Activated B cell treated with CpG ODN at 0.5 μM for 24 hours (primary cell): ENCODE measurements at regions of chr2 and their contacts with region 1.

Region 1: GRCh38 chr2:148509288-148509902 is 135.2 kb upstream of the EPC2 start:
- DNase-seq: peak; percentile 63
- ATAC-seq: peak; percentile 100
- H3K4me3 Mint-ChIP-seq: peak overlapping the region; percentile 70
- H3K27ac Mint-ChIP-seq: peak overlapping the region; percentile 32
- H3K4me1 Mint-ChIP-seq: peaks cover 12% of the 10 kb centered on the region
- H3K27me3 Mint-ChIP-seq: no peaks in the 10 kb centered on the region
- CTCF ChIP-seq: peak; percentile 43

Region 2: DNA sequence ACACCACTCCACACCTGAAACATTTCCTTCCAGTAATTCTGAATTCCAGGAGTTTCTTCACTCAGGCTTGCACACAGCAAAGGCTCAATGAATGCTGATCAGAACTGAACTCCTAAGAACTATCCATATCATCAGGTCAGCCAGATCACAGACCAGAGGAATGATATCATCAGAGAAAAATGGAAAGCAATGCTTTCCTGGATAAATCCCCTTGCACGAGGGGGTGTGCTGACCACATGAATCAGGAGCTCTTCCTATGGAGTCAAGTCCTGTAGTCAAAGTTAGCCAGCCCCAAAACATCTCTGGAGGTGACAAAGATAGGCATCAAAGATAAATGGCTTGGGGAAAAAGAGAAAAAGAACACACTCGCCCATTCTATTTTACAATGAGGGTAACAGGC is 748.4 kb before region 1 on chr2:
- CTCF ChIA-PET with region 1: no interaction called
- POLR2A ChIA-PET with region 1: no interaction called
- intact Hi-C with region 1: no loop called
- DNase-seq: no peak
- ATAC-seq: no peak
- H3K4me3 Mint-ChIP-seq: no peak overlapping the region
- H3K27ac Mint-ChIP-seq: no peak overlapping the region
- H3K4me1 Mint-ChIP-seq: no peaks in the 10 kb centered on the region
- H3K27me3 Mint-ChIP-seq: no peaks in the 10 kb centered on the region
- CTCF ChIP-seq: no peak

Region 3: DNA sequence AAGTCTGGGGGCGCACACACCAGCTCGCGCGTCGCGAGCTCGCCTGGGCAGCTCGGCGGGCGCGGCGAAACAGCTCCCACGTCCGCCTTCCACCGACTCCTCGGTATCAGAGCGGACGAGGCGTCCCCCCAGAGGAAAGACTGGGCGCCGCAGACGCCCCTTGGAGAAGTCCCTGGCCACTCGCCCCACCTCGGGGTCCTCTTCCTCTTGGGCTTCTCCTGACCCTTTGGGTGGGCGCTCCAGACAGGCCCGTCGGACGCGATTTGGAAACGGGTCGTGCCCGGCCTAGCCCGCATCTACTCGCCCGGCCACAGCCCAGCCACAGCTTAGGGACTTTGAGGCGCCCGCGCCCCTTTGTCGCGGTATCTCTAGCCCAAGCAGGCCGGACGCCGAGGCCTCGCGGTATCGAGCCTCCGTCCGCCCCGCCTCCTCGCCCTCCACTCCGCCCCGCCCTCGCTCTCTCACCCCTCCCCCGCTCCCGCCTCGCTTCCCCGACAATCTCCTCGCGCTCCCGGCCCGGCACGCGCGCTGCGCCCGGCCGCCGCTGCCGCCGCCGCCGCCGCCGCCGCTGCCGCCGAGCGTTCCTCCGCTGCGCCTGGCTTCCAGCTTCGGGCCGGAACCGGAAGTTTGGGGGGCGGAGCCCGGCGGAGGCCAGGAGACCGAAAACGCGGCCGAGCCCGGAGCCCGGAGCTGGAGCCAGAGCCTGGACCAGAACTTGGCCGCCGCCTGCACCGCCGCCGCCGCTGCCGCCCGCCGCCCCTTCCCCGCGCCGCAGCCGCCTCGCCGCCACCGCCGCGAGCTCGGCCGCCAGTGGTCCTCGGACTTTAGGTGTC is 665.3 kb before region 1 on chr2:
- CTCF ChIA-PET with region 1: no interaction called
- POLR2A ChIA-PET with region 1: no interaction called
- intact Hi-C with region 1: loop called (anchors 5 kb)
- DNase-seq: peak; percentile 88
- ATAC-seq: peak; percentile 83
- H3K4me3 Mint-ChIP-seq: peak overlapping the region; percentile 88
- H3K27ac Mint-ChIP-seq: peak overlapping the region; percentile 80
- H3K4me1 Mint-ChIP-seq: peaks cover 29% of the 10 kb centered on the region
- H3K27me3 Mint-ChIP-seq: peaks cover 31% of the 10 kb centered on the region
- CTCF ChIP-seq: no peak

Region 4: DNA sequence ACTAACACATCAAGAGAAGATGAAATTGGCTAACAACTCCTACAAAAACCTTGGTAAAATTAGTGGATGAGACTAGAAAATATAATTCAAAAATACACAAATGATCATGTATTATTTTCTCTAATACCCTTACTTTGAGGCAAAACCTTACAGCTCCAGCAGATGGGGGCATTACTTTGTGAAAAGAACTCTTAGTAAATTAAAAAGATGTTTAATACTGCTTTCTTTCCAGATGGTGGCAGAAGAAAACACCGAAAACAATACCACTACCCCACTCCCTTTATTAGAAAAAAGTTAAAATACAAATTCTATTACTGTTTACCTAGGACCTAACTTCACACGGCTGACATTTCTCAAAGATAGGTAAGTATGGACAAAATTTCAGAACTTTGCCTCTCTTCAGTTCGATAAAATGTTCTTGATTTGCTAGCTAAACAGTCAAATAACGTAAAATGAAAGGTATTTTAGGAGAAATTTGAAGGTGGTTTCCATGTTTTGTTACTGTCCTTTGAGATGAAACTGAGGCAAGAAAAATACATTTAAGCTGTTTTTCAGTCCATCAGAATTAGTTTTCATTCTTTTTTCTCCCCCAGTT is 519.5 kb before region 1 on chr2:
- CTCF ChIA-PET with region 1: interaction called, 118 read pairs
- POLR2A ChIA-PET with region 1: interaction called, 3 read pairs
- intact Hi-C with region 1: loop called (anchors 1 kb)
- DNase-seq: no peak
- ATAC-seq: peak; percentile 83
- H3K4me3 Mint-ChIP-seq: no peak overlapping the region
- H3K27ac Mint-ChIP-seq: no peak overlapping the region
- H3K4me1 Mint-ChIP-seq: peaks cover 18% of the 10 kb centered on the region
- H3K27me3 Mint-ChIP-seq: no peaks in the 10 kb centered on the region
- CTCF ChIP-seq: no peak

Region 5: GRCh38 chr2:148201075-148202004 is 308.1 kb before region 1 on chr2:
- CTCF ChIA-PET with region 1: no interaction called
- POLR2A ChIA-PET with region 1: no interaction called
- intact Hi-C with region 1: loop called (anchors 1 kb)
- DNase-seq: peak; percentile 16
- ATAC-seq: peak; percentile 49
- H3K4me3 Mint-ChIP-seq: no peak overlapping the region
- H3K27ac Mint-ChIP-seq: no peak overlapping the region
- H3K4me1 Mint-ChIP-seq: no peaks in the 10 kb centered on the region
- H3K27me3 Mint-ChIP-seq: no peaks in the 10 kb centered on the region
- CTCF ChIP-seq: no peak

Region 6: GRCh38 chr2:148582679-148583511 is 73.5 kb after region 1 on chr2:
- CTCF ChIA-PET with region 1: no interaction called
- POLR2A ChIA-PET with region 1: no interaction called
- intact Hi-C with region 1: no loop called
- DNase-seq: no peak
- ATAC-seq: no peak
- H3K4me3 Mint-ChIP-seq: no peak overlapping the region
- H3K27ac Mint-ChIP-seq: no peak overlapping the region
- H3K4me1 Mint-ChIP-seq: peaks cover 6% of the 10 kb centered on the region
- H3K27me3 Mint-ChIP-seq: peaks cover 7% of the 10 kb centered on the region
- CTCF ChIP-seq: no peak

Region 7: DNA sequence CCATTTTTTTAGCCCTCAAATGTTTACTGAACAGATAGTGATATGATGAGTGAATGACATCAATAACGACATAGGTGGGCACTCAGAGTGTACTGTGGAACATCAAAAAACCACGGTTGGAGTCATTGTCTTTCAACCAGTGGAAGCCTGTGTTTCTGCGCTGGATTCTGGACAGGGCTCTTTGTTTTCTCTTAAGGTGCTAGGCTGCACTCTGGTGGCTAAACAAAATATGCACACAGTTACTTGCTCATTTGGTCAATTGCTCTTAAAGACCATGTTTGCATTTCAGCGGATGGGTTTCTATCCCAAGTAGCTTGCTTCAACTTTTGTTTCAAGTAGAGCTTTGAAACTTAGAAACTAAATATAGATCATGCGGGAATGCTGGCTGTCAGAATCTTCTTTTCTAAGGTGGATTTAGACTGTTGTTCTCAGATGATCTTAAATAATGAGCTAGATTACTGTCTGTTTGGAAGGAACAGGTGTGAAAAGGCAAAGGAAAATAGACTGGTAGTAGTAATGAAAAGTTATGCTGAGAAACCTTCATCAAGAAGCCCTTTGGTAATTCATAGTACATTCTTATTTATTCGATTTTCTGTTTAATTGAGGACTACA is 480.6 kb after region 1 on chr2:
- CTCF ChIA-PET with region 1: interaction called, 13 read pairs
- POLR2A ChIA-PET with region 1: no interaction called
- intact Hi-C with region 1: loop called (anchors 1 kb)
- DNase-seq: no peak
- ATAC-seq: peak; percentile 40
- H3K4me3 Mint-ChIP-seq: no peak overlapping the region
- H3K27ac Mint-ChIP-seq: no peak overlapping the region
- H3K4me1 Mint-ChIP-seq: peaks cover 13% of the 10 kb centered on the region
- H3K27me3 Mint-ChIP-seq: no peaks in the 10 kb centered on the region
- CTCF ChIP-seq: no peak